ENCODE measurements at regions of chr3 and their contacts with region 1.

Region 1: DNA sequence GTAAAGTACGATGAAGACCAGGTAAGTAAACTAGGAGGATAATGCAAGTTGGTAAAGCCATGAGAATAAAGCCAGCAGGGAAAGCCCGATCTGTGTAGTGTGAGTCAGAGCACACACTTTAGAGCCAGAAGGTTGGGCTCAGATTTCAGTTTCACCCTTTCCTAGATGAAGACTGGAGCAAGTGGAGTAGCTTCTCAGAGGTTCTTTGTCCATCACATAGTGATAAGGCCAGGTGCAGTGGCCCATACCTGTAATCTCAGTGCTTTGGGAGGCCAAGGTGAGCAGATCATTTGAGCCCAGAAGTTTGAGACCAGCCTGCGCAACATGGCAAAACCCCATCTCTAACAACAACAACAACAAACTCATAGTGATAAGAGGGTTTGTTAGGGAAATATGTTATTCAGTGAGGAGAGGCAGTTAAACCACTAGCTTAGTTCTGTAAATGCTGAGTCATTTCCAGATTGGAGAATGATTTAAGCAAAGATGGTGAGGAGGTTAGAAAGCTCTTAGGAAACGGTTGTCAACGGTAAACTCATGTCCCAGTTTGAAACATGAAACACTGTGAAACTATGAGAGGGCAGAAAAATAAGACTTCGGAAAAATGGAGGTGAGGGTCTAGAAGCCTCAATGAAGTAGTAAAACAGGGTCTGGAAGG is 39.0 kb downstream of the IL12A start:
- DNase-seq: peak in 1 of 2 experiments; percentile 23
- ATAC-seq: peak; percentile 44 to 63; a peak in 3 of 6 replicates
- H3K4me3 ChIP-seq: no peak overlapping the region
- H3K27ac ChIP-seq: peak overlapping the region; percentile 48 to 72; a peak in 5 of 6 replicates
- H3K4me1 ChIP-seq: peaks cover 19% of the 10 kb centered on the region
- CTCF ChIP-seq: no peak
- EP300 ChIP-seq: no peak
- POLR2A ChIP-seq: no peak
- RAD21 ChIP-seq: no peak

Region 2: GRCh38 chr3:160040181-160040580 is 12.5 kb after region 1 on chr3:
- CTCF ChIA-PET with region 1: interaction called, 32 read pairs
- POLR2A ChIA-PET with region 1: no interaction called
- DNase-seq: no peak
- ATAC-seq: no peak; a peak in 1 of 6 replicates
- H3K4me3 ChIP-seq: no peak overlapping the region
- H3K27ac ChIP-seq: no peak overlapping the region
- H3K4me1 ChIP-seq: peaks cover 3% of the 10 kb centered on the region; the same call in 2 of the 3 replicates
- CTCF ChIP-seq: no peak
- EP300 ChIP-seq: no peak
- POLR2A ChIP-seq: no peak
- RAD21 ChIP-seq: no peak

Region 3: DNA sequence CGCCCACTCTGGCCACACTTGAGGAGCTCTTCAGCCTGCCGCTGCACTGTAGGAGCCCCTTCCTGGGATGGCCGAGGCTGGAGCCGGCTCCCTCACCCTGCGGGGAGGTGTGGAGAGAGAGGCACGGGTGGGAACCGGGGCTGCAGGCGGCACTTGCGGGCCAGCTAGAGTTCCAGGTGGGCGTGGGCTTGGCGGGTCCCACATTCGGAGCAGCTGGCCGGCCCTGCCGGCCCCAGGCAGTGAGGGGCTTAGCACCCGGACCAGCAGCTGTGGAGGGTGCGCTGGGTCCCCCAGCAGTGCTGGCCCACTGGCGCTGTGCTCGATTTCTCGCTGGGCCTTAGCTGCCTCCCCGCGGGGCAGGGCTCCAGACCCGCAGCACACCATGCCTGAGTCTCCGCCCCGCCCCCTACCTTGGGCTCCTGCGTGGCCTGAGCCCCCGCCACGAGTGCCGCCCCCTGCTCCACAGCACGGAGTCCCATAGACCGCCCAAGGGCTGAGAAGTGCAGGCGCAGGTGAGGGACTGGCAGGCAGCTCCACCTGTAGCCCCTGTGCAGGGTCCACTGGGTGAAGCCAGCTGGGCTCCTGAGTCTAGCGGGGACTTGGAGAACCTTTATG is 32.8 kb after region 1 on chr3:
- CTCF ChIA-PET with region 1: no interaction called
- POLR2A ChIA-PET with region 1: no interaction called
- DNase-seq: no peak
- ATAC-seq: no peak
- H3K4me3 ChIP-seq: no peak overlapping the region
- H3K27ac ChIP-seq: no peak overlapping the region
- H3K4me1 ChIP-seq: no peaks in the 10 kb centered on the region
- CTCF ChIP-seq: no peak
- EP300 ChIP-seq: no peak
- POLR2A ChIP-seq: no peak
- RAD21 ChIP-seq: no peak

Region 4: GRCh38 chr3:160133757-160134156 is 106.1 kb after region 1 on chr3:
- CTCF ChIA-PET with region 1: interaction called, 12 read pairs
- POLR2A ChIA-PET with region 1: no interaction called
- DNase-seq: peak in 1 of 2 experiments; percentile 66
- ATAC-seq: peak in 1 of 2 experiments; percentile 62; a peak in 3 of 6 replicates
- H3K4me3 ChIP-seq: no peak overlapping the region
- H3K27ac ChIP-seq: peak overlapping the region; percentile 60 to 85
- H3K4me1 ChIP-seq: peaks cover 45% of the 10 kb centered on the region
- CTCF ChIP-seq: no peak
- EP300 ChIP-seq: no peak
- POLR2A ChIP-seq: no peak
- RAD21 ChIP-seq: peak in 1 of 2 experiments; percentile 28; a peak in 1 of 5 replicates

Region 5: DNA sequence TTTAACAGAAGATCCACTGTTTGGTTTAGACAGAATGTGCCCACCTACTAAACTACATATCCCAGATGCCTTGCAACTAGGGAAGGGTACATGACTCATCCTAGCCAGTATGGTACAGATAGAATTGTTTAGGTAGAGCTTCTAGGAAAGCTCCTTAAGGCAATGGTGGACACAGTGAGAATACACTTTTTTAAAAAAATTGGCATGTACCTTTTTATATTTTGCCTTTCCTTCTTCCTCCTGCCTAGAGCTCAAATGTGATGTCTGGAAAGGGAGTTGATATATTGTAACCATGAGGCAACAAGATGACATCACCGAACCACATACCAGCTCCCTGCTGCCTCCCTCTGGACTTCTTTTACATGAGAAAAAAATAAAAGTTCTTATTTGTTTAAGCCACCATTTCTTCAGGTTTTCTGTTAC is 183.1 kb after region 1 on chr3:
- CTCF ChIA-PET with region 1: interaction called, 17 read pairs
- POLR2A ChIA-PET with region 1: no interaction called
- DNase-seq: peak in 1 of 2 experiments; percentile 66
- ATAC-seq: peak; percentile 85 to 88
- H3K4me3 ChIP-seq: no peak overlapping the region
- H3K27ac ChIP-seq: peak overlapping the region; percentile 27 to 39; a peak in 2 of 6 replicates
- H3K4me1 ChIP-seq: peaks cover 6% of the 10 kb centered on the region; the same call in 1 of the 3 replicates
- CTCF ChIP-seq: peak; percentile 43
- EP300 ChIP-seq: no peak
- POLR2A ChIP-seq: no peak
- RAD21 ChIP-seq: peak; percentile 42 to 48; a peak in 4 of 5 replicates

Region 6: DNA sequence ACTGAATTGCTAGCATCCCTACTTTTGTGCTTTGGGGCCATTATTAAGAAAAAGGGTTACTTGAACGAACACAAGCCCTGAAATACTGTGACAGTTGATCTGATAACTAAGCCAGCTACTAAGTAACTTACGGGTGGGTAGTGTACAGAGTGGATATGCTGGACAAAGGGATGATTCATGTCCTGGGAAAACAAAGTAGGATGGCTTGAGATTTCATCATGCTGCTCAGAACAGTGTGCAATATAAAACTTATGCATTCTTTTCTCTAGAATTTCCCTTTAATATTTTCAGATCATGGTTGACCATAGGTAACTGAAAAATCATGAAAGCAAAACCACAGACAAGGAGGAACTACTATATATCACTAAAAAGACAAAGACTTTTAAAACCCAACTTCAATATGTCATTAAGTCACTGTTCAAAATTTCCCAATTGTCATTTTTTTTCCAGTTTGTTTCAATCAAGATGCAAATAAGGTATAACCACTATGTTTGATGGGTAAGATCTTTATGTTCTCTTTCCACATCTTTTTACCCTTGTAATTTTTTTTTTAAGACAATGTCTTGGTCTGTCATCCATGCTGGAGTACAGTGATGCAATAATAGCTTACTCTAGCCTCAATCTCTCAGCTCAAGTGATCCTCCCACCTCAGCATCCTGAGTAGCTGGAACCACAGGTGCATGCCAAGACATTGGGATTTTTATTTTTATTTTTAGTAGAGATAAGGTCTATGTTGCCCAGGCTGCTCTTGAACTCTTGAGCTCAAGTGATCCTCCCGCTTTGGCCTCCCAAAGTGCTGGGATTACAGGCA is 303.7 kb after region 1 on chr3:
- CTCF ChIA-PET with region 1: interaction called, 12 read pairs
- POLR2A ChIA-PET with region 1: no interaction called
- DNase-seq: peak; percentile 8 to 69
- ATAC-seq: peak; percentile 90 to 99
- H3K4me3 ChIP-seq: no peak overlapping the region
- H3K27ac ChIP-seq: peak overlapping the region; percentile 87 to 90
- H3K4me1 ChIP-seq: peaks cover 23% of the 10 kb centered on the region
- CTCF ChIP-seq: no peak
- EP300 ChIP-seq: 0 out of 5 replicates have a peak, but pooled peaks have one; percentile 18 to 46
- POLR2A ChIP-seq: no peak
- RAD21 ChIP-seq: no peak

Region 7: DNA sequence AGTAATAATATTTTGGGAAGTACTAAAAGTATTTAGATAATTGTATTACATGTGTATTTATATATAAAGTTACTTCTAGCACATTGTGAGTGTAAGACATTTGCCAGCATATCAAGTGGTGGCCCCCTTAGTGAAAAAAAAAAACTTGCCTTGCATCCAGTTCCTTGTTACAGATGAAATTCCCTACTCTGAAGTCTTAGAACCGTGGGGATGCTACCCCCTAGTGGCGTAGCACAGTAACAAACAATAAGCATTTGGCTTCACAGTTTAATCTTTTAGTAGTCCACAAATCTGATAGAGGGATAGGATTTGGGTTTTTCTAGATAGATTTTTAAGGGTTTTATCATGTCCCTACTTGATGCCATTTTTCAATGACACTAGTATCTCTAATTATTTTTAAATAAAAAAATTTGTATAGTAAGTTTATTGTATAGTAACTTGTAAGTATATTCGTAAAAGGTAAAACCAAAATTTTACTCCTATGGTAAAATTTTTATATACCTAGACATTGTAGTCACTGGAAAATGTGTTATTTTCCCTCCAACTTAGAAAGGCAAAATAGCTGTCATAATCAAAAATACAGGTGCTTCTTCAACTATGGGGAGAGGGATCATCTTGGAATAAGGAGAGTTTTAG is 386.1 kb after region 1 on chr3:
- CTCF ChIA-PET with region 1: interaction called, 37 read pairs
- POLR2A ChIA-PET with region 1: interaction called, 4 read pairs
- DNase-seq: peak; percentile 55 to 79
- ATAC-seq: peak; percentile 82 to 88
- H3K4me3 ChIP-seq: no peak overlapping the region
- H3K27ac ChIP-seq: no peak overlapping the region
- H3K4me1 ChIP-seq: peaks cover 16% of the 10 kb centered on the region; the same call in 2 of the 3 replicates
- CTCF ChIP-seq: peak; percentile 90
- EP300 ChIP-seq: no peak
- POLR2A ChIP-seq: no peak
- RAD21 ChIP-seq: peak; percentile 78 to 85

Measured in A549 (cell line).